ENCODE measurements at regions of chr5 and their contacts with region 1.

Region 1: DNA sequence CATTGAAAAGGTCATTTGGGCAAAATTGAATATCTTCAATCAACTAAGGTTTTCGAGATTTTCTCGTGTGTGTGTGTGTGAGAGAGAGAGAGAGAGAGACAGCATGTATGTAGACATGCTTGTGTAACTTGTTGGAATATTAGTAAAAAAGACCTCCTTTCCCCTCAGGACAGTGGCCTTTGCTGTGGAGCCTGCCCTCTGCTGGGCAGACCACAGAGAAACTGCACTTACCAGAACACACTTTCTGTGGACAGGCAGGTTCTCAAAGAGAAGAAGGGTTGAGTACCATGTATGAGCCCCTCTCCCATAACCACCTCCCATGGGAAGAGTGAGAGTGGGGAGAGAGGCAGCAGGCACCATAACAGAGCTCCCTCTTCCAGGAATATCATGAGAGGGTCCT is 45.6 kb downstream of the CFAP90 start:
- DNase-seq: no peak
- H3K4me3 ChIP-seq: no peak overlapping the region
- H3K27ac ChIP-seq: no peak overlapping the region
- H3K4me1 ChIP-seq: no peaks in the 10 kb centered on the region
- H3K27me3 ChIP-seq: no peaks in the 10 kb centered on the region
- CTCF ChIP-seq: peak; percentile 42 to 44 (median 44)
- EP300 ChIP-seq: no peak
- POLR2A ChIP-seq: no peak
- RAD21 ChIP-seq: peak; percentile 47 to 49

Region 2: DNA sequence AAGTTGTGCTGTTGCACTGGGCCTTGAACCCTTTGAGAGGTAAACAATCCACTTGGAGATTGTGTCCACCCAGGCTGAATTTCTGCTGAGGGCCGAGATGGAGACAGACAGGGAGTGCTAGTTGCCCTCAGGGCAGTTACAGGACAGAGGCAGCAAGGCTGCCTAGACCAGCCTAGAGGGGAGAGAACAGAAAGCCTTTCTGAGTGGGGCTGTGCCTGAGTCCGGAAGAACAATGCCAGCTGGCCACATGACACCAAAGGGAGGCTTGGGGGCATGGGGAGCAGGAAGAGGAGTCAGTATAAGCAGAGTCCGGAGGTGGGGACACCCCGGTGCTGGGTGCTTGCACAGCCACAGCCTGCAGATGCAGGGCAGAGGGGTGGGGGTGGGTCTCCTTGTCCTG is 100.1 kb before region 1 on chr5:
- CTCF ChIA-PET with region 1: no interaction called
- POLR2A ChIA-PET with region 1: no interaction called
- DNase-seq: no peak
- H3K4me3 ChIP-seq: no peak overlapping the region
- H3K27ac ChIP-seq: no peak overlapping the region
- H3K4me1 ChIP-seq: peaks cover 0 to 5% (median 4%) of the 10 kb centered on the region in 4 experiments; a peak in 2 of 7 replicates
- H3K27me3 ChIP-seq: no peaks in the 10 kb centered on the region
- CTCF ChIP-seq: no peak
- EP300 ChIP-seq: no peak
- POLR2A ChIP-seq: no peak
- RAD21 ChIP-seq: no peak

Region 3: GRCh38 chr5:7754992-7755596 is 50.3 kb before region 1 on chr5:
- CTCF ChIA-PET with region 1: interaction called, 10 read pairs
- POLR2A ChIA-PET with region 1: no interaction called
- DNase-seq: peak; percentile 56 to 87
- H3K4me3 ChIP-seq: no peak overlapping the region
- H3K27ac ChIP-seq: no peak overlapping the region
- H3K4me1 ChIP-seq: no peaks in the 10 kb centered on the region
- H3K27me3 ChIP-seq: no peaks in the 10 kb centered on the region
- CTCF ChIP-seq: peak; percentile 86 to 99 (median 96)
- EP300 ChIP-seq: no peak
- POLR2A ChIP-seq: no peak
- RAD21 ChIP-seq: peak; percentile 83 to 89

Region 4: DNA sequence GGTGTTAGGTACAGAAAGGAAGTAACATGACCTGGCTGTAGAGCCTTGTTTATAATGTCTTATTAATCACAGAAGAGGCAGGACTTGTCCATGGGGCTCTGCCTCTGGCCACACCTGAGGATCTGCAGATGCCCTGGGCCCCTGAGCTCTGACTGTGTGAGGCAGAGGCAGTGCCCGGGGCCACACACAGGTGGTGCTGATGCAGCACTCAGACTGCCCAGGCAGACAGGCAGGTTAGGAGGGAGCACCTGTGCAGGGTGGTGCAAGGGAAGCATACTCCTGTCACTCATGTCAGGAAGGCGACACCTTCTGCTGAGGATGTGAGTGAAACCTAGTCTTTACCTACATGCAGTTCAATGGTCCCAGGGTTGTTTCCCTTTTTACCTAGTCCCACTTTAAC is 43.1 kb before region 1 on chr5:
- CTCF ChIA-PET with region 1: interaction called, 10 read pairs
- POLR2A ChIA-PET with region 1: no interaction called
- DNase-seq: no peak
- H3K4me3 ChIP-seq: no peak overlapping the region
- H3K27ac ChIP-seq: no peak overlapping the region
- H3K4me1 ChIP-seq: no peaks in the 10 kb centered on the region
- H3K27me3 ChIP-seq: no peaks in the 10 kb centered on the region
- CTCF ChIP-seq: peak; percentile 63 to 73 (median 73)
- EP300 ChIP-seq: no peak
- POLR2A ChIP-seq: no peak
- RAD21 ChIP-seq: peak; percentile 61 to 78

Region 5: DNA sequence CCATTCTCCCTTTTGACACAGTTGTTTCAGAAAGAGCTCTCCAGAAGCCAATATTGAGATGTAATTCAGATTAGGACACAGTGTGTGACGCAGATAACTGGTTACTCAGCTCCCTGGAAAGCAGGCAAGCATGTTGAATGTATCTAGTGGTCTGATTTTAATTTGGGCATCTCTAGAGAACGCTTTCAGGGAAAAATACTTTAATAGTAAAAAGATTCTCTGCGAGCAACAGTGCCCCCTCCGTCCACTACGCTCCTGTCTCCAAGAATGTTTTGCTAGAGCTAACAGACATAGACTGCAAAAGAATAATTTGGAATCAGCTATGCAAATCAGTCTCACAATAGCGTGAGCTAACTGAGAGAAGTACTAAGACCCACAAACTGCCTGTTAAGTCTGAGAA is 22.2 kb after region 1 on chr5:
- CTCF ChIA-PET with region 1: no interaction called
- POLR2A ChIA-PET with region 1: no interaction called
- DNase-seq: no peak
- H3K4me3 ChIP-seq: no peak overlapping the region
- H3K27ac ChIP-seq: no peak overlapping the region
- H3K4me1 ChIP-seq: no peaks in the 10 kb centered on the region
- H3K27me3 ChIP-seq: peaks cover 0 to 2% (median 0%) of the 10 kb centered on the region in 4 experiments; a peak in 1 of 7 replicates
- CTCF ChIP-seq: no peak
- EP300 ChIP-seq: no peak
- POLR2A ChIP-seq: no peak
- RAD21 ChIP-seq: no peak

Measured in H1 (cell line).